AG04449 (cell line): ENCODE measurements at regions of chr2 and their contacts with region 1.

Region 1: DNA sequence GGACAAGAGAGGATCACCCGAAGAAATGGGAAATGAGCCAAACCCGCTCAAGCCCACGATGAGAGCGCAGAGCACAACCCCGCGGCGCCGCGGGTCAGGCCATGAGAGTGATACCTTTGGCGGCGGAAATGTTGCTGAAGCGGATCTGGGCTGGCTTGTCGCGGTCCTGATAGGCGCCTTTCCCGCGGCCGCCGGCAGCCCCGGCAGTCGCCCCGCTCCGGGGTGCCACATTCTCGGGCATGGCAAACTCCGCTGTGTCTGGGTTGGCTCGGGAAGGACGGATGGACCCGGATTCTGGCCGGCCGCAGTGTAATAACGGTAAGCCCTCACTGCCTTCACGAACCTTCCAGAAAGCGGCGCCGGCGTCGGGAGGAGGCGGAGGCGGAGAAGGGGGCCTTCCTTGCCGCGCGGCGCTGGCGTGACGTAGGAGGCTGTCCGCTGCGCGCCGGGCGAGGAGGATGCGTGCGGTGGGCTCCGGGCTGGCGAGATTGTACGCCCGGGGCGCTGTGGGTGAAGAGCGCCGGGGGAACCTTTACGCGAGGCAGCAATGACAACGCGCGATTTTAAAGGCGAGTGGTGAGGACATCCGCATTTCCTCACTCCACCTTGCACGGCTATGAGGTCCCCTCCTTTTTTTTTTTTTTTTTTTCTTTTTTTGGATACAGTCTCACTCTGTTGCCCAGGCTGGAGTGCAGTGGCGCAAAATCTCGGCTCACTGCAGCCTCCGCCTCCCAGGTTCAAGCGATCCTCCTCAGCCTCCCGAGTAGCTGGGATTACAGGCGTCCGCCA is at the start of gene CCT4:
- DNase-seq: no peak
- H3K4me3 ChIP-seq: peak within 1 kb of the TSS; percentile 87
- CTCF ChIP-seq: no peak

Region 2: GRCh38 chr2:61905372-61906185 is 17.1 kb after region 1 on chr2 and contains the start of gene COMMD1:
- CTCF ChIA-PET with region 1: interaction called, 13 read pairs
- POLR2A ChIA-PET with region 1: interaction called, 4 read pairs
- DNase-seq: no peak
- H3K4me3 ChIP-seq: peak within 1 kb of the TSS; percentile 88
- CTCF ChIP-seq: no peak